Head of caudate nucleus (tissue), 42 donors: ENCODE measurements at regions of chr20 and their contacts with region 1.

Region 1: DNA sequence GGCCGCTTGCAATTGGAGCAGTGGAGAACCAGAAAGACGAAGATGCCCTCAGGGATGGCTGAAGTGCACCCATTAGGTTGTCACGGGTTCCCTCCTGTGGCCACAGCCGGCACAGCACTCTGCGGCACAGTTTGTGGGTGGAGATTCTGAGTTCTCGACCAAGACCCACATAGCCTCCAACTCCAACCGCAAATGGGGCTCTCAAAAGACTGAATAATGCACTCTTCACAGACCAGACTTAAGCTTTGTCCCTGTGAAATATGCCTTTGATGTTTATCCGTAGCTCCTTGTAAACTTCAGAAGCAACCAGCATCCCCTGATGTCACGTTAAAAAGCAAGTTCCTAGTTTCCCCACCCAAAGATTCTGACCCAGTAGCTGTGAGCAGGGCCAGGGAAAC is 934 bp upstream of the CST9 start:
- DNase-seq: peak; percentile 46 to 88 (median 76)

Region 2: DNA sequence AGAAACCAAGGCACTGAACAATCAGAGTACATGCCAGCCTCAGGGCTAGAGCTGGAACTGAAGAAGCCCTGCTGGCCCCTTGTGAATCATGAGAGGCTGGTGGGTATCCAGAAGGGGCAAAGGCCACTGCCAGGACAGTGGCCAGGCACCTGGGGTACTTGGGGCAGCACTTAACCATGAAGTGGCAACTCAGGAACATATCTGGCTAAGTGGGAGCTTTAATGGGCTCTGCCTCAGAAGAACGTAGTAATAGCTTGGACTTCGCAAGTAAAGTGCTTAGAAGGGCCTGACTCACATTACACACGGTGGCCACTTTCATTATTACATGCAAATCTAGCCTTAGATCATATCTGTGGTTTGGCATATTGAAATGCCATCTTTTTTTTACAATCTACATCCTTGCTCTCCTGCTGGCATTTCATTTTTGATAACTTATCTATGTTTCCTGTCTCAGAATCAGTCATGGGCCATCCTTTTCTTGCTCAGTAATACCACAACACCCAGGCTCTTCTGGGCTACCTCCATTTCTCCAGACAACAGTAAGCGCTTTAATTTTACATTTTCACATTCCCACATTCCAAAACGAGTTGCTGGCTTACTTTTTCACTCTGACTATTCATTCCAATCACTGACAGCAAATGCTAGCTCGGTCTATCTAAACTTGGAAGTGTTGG is 206.9 kb before region 1 on chr20:
- intact Hi-C with region 1: no loop called
- DNase-seq: no peak

Region 3: GRCh38 chr20:23441850-23442313 is 164.8 kb before region 1 on chr20:
- intact Hi-C with region 1: loop called (anchors 5 kb)
- DNase-seq: peak; percentile 45 to 89 (median 78)

Region 4: GRCh38 chr20:23530937-23531567 is 75.6 kb before region 1 on chr20:
- intact Hi-C with region 1: no loop called
- DNase-seq: peak in 1 of 42 donors; percentile 6